ENCODE measurements at regions of chr17 and their contacts with region 1.

Region 1: DNA sequence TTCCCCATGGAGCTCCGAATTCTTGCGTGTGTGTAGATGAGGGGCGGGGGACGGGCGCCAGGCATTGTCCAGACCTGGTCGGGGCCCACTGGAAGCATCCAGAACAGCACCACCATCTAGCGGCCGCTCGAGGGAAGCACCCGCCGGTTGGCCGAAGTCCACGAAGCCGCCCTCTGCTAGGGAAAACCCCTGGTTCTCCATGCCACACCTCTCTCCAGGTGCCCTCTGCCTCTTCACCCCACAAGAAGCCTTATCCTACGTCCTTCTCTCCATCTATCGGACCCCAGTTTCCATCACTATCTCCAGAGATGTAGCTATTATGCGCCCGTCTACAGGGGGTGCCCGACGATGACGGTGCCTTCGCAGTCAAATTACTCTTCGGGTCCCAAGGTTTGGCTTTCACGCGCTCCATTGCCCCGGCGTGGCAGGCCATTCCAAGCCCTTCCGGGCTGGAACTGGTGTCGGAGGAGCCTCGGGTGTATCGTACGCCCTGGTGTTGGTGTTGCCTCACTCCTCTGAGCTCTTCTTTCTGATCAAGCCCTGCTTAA is 617 bp upstream of the SENP3 start:
- DNase-seq: peak; percentile 78 to 96 (median 89)

Region 2: GRCh38 chr17:7435221-7435675 is 125.9 kb before region 1 on chr17 and contains the start of gene TMEM102:
- intact Hi-C with region 1: loop called (anchors 2 kb)
- DNase-seq: peak; percentile 85 to 97 (median 94)

Region 3: GRCh38 chr17:7484067-7484918 is 76.8 kb before region 1 on chr17 and contains the start of gene POLR2A:
- intact Hi-C with region 1: no loop called
- DNase-seq: peak; percentile 95 to 99 (median 98)

Region 4: DNA sequence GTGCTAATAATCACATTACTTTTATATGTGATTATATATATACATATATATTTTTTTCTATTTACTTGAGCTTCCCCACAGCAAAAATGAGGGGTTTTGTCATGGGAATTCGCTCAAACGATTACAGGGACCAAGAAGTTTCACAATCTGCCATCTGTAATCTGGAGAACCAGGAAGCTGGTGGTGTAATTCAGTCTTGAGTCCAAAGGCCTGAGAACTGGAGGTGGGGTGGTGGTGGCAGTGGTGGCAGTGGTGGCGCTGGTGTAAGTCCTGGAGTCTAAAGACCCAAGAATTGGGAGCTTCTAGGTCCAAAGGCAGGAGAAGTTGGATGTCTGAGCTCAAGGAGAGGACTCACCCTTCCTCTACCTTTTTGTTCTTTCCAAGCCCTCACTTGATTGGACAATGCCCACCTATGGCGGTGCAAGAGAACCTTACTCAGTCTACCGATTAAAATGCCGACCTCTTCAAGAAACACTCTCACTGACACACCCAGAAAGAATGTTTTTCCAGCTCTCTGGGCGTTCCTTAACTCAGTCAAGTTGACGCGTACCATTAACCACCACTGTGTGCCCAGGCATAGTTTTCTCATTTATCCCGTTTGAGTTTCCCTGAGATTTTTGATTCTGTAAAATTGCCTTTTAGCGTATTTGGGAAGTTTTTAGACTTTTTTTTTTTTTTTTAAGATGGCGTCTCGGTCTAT is 45.0 kb before region 1 on chr17:
- intact Hi-C with region 1: loop called (anchors 2 kb)
- DNase-seq: no peak

Region 5: GRCh38 chr17:7590743-7591142 is 29.6 kb after region 1 on chr17:
- intact Hi-C with region 1: no loop called
- DNase-seq: no peak

Region 6: GRCh38 chr17:7687908-7688807 is 127.1 kb after region 1 on chr17 and contains the start of gene WRAP53:
- intact Hi-C with region 1: no loop called
- DNase-seq: peak; percentile 95 to 99 (median 98)

Measured in head of caudate nucleus (tissue), 42 donors.